KBM-7 (cell line): ENCODE measurements at regions of chr2 and their contacts with region 1.

Region 1: DNA sequence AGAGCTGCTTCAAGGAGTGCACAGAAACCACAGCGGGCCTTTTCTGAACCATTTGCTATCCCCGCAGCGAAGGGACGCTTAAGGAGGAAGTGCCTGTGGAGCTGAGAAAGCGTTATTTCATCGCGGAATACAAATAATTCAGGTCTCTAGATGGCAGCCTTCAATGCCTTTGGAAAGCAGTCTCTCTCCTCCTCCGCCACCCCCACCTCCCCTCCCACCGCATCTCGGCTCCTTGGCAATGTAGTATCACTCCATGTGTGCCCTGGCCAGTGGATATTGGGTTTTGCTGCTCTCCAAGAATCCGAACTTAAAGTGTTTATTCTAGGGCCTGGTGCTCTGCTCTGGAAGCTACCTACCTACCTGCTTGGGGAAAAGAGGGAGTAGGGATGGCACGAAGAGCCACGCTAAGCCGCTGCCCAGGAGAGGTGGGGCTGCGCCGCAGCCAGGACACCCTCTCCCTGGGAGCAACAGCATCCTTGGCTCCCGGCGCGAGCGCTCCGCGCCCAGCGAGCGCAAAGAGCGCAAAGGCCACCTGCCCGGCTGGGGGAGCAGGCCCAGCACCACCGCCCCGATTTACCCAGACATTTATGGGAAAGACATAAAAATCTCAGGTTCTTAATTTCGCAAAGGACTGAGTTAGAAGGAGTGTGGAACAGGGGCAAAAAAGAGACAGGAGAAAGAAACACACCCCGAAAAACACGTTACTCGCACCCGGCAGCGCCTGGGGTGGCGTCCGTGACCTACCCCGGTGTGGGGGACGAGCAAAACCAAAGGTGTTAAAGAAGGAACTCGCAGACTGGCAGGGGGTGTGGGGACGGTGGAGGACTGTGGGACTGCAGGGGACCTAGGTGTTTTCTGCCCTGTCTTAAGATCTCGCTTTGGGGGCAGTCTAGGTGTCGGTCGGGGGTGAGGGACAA is 1.0 kb downstream of the SPHKAP start:
- DNase-seq: no peak

Region 2: GRCh38 chr2:228094377-228094921 is 86.0 kb before region 1 on chr2:
- in situ Hi-C with region 1: loop called (anchors 25 kb)
- DNase-seq: no peak

Region 3: DNA sequence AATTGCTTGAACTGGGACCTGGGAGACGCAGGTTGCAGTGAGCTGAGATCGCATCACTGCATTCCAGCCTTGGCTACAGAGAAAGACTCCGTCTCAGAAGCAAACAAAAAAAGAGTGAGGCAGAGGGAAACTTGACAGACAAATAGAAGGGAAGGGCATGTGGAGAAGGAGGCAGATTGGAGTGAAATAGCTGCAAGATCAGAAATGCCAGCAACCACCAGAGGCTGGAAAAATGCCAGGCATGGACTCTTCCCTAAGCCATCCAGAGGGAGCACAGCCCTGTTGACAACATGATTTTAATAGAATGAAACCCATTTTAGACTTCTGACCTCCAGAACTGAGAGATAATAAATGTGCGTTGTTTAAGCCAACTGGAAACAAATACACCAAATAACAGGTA is 448.2 kb after region 1 on chr2:
- in situ Hi-C with region 1: no loop called
- DNase-seq: no peak